ENCODE measurements at regions of chr9 and their contacts with region 1.

Region 1: GRCh38 chr9:95510709-95511615 is 5.8 kb downstream of the PTCH1 start:
- DNase-seq: peak; percentile 82
- H3K4me3 Mint-ChIP-seq: peak overlapping the region; percentile 84
- H3K27ac Mint-ChIP-seq: peak overlapping the region; percentile 88
- H3K4me1 Mint-ChIP-seq: peaks cover 41% of the 10 kb centered on the region
- H3K27me3 Mint-ChIP-seq: peaks cover 61% of the 10 kb centered on the region

Region 2: GRCh38 chr9:95181226-95181818 is 329.6 kb before region 1 on chr9:
- intact Hi-C with region 1: loop called (anchors 10 kb)
- DNase-seq: no peak
- H3K4me3 Mint-ChIP-seq: no peak overlapping the region
- H3K27ac Mint-ChIP-seq: no peak overlapping the region
- H3K4me1 Mint-ChIP-seq: peaks cover 9% of the 10 kb centered on the region
- H3K27me3 Mint-ChIP-seq: no peaks in the 10 kb centered on the region

Region 3: DNA sequence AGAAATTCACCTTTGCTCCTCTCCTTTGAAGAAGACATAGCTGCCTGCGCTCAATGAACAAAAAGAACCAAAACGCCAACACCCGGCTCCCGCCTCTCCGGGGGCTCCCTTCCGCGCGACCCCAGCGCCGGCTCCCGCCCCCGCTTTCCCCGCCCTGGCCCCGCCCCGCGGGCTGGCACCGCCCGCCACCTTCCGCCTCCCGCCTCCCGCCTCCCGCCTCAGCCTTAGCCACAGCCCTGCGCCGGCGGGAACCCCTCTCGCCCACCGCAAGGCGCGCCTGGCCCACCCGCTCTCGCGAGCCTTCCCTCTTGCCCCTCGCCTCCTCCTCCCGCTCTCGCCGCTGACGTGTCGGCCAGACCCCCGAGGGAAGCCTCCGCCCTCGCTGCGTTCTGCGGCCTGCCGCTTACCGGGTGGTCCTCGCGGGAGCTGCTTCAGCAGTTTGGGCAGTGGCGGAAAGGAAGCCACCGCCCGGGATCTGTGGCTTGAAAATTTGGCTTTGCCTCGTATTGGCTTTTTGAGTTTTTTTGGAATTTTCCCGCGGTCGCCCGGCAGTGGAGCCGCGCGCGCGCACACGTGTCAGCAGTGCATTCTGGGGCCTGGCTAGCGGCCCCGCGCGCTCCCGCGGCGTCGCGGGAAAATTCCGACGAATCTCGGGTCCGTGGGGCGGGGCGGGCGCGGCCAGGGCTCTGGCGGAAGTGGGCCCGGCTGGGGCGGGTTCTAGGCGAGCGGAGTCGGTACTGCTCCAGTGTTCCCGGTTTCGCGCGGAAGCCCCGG is 193.7 kb before region 1 on chr9 and contains the start of gene FANCC:
- intact Hi-C with region 1: loop called (anchors 1 kb)
- DNase-seq: peak; percentile 84
- H3K4me3 Mint-ChIP-seq: peak within 1 kb of the TSS; percentile 91
- H3K27ac Mint-ChIP-seq: peak within 1 kb of the TSS; percentile 95
- H3K4me1 Mint-ChIP-seq: peaks cover 25% of the 10 kb centered on the region
- H3K27me3 Mint-ChIP-seq: peaks cover 12% of the 10 kb centered on the region
- total RNA-seq, gene FANCC: 18.7 and 23.7 TPM in 2 replicates

Region 4: DNA sequence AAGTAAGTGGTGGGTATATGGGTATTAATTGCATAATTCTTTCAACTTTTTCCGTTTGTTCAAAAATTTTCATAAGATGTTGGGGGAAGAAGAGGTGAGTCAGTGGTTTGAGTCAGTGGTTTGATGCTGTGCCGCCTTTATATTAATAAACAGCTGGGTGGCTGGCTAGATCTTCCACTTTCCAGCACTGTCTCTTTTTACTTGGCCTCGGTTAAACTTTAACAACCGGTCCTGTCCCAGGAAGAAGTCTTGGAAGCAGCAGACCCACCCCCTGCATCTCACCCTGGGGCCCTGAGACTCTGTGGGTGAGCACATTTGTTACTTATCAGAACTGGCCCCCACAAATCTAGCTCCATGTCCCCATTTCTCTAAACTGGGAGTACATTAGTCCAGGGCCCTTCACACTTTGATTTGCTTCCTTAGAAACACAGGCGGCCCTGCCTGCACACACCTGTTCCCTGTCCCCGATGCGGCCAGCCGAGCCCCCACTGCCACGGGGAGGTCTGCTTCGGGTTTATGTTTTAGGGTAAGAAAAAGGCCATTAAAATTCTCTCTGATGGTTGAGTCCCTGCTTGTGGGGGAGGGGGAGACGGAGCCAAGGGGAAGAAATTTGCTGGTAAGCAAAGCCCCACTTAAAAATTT is 84.9 kb before region 1 on chr9:
- intact Hi-C with region 1: loop called (anchors 10 kb)
- DNase-seq: no peak
- H3K4me3 Mint-ChIP-seq: peak overlapping the region; percentile 56
- H3K27ac Mint-ChIP-seq: no peak overlapping the region
- H3K4me1 Mint-ChIP-seq: peaks cover 11% of the 10 kb centered on the region
- H3K27me3 Mint-ChIP-seq: peaks cover 5% of the 10 kb centered on the region

Region 5: DNA sequence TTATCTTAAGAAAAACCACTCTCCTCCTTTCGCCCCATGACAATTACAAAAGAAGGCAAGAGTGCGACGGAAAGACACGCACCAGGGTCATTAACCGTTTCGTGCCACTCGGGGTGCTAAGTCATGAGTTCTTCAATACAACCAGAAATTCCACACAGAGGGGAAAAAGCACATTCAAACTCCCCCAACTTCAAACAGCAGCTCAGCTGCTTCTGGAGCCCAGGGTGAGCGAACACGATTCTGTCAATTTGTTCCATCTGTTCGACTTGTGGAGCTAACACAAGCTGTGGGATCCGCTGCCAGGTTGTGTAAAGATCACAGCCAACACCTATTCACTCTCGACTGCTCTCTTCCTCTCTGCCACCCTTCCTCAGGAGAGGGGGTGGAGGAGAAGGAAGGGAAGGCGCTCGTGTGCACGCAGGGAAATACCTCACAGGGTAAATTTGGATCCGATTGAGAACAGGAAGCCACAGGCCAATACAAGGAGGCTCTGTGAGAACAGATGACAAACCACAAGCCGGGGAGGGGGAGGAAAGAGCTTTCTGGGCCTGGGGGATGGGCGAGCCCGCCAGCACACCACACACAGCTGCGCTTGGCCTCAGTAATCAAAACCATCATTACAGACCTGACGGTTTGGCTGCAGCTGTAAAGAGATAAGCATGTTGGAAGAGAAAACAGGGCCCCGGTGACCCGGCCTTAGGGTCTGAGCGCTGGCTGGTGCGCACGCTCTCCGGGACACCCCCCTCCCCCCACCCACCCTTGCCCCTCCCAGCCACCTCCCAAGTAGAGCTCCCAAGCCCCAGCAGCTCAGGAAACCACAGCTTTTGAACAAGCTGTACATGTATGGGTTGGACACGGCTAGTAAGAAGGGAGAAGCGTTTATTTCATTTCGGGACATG is 48.5 kb before region 1 on chr9:
- intact Hi-C with region 1: loop called (anchors 1 kb)
- DNase-seq: peak; percentile 78
- H3K4me3 Mint-ChIP-seq: peak overlapping the region; percentile 77
- H3K27ac Mint-ChIP-seq: peak overlapping the region; percentile 82
- H3K4me1 Mint-ChIP-seq: peaks cover 34% of the 10 kb centered on the region
- H3K27me3 Mint-ChIP-seq: peaks cover 53% of the 10 kb centered on the region

Region 6: DNA sequence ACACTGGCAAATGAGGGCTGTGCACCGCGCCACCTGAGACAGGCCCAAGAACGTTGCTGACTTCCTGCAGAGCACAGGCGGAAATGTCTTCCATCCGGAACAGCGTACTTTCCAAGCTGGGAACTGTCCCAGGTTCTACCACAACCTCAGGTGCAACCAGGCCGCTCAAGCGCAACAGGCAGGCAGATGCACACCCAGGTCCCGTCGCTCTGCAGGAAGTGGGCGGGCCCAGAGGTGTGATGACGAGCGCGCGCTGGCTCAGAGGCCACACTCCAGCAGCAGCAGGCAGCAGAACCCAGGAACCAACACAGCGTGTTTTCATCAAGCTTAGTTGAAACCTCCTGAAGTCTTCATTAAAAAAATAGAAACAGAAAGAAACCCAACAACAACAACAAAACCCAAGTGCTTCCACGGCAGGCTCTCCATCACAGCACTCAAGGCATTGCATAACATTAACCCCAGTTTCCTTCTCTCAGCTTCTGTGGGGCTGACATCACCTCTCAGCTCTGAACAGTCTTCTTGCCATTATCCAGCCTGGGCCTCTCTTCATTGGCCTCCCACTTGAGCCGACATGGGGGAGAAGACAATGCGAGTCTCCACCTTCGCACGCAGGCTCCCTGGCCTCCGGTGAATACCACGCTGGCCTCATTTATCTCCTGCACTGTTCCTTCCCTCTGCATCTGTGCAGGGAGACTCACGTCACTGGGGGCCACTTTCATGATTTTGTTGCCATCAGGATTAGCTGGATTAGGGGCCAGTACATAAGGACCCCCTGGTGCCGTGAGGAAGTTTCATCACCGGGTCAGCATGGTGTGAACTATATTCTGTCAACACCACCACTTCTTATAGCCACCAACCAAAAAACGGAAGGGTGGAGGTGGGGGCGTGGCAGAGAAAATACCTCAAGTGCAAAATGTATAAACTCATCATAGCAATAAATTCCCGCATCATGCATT is 16.3 kb before region 1 on chr9:
- intact Hi-C with region 1: loop called (anchors 1 kb)
- DNase-seq: peak; percentile 81
- H3K4me3 Mint-ChIP-seq: peak overlapping the region; percentile 81
- H3K27ac Mint-ChIP-seq: peak overlapping the region; percentile 86
- H3K4me1 Mint-ChIP-seq: peaks cover 40% of the 10 kb centered on the region
- H3K27me3 Mint-ChIP-seq: peaks cover 31% of the 10 kb centered on the region